Activated CD4-positive, alpha-beta T cell treated with anti-CD3 and anti-CD28 coated beads, Interleukin-2, amount 10 ng/mL, durations not matched to agents 24 days and 14 days (primary cell): ENCODE measurements at regions of chr10 and their contacts with region 1.

Region 1: DNA sequence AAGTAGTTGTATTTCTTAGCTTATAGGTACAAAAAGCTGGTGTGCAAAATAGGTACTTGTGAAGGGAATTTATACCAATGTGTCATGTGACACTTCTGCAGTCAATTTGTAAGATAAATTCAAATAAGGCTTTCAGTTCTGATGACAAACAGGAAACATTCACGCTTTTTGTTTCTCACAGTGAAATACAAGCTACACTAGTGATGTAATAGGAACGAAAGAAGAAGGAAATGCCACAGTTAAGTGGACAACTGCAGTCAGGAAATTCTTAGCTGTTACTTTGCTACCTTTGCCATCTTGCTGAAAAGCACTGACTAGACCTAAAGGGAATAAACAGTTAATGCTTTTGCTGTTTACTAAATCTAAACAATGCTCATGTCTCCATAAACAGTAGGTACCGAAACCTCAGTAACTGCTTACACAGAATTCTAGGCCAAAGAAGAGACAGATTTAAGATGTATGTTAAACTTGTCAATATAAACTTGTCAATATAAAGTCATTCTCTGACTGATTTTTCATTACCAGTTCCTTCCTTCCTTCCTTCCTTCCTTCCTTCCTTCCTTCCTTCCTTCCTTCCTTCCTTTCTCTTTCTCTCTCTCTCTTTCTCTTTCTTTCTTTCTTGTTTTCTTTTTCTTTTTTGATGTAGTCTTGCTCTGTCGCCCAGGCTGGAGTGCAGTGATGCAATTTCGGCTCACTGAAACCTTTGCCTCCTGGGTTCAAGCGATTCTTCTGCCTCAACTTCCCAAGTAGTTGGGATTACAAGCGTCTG is 10.1 kb downstream of the OTUD1 start:
- DNase-seq: no peak
- H3K4me3 Mint-ChIP-seq: peak overlapping the region; percentile 55
- H3K27ac Mint-ChIP-seq: peak overlapping the region; percentile 91
- H3K4me1 Mint-ChIP-seq: peaks cover 28% of the 10 kb centered on the region
- H3K27me3 Mint-ChIP-seq: no peaks in the 10 kb centered on the region

Region 2: DNA sequence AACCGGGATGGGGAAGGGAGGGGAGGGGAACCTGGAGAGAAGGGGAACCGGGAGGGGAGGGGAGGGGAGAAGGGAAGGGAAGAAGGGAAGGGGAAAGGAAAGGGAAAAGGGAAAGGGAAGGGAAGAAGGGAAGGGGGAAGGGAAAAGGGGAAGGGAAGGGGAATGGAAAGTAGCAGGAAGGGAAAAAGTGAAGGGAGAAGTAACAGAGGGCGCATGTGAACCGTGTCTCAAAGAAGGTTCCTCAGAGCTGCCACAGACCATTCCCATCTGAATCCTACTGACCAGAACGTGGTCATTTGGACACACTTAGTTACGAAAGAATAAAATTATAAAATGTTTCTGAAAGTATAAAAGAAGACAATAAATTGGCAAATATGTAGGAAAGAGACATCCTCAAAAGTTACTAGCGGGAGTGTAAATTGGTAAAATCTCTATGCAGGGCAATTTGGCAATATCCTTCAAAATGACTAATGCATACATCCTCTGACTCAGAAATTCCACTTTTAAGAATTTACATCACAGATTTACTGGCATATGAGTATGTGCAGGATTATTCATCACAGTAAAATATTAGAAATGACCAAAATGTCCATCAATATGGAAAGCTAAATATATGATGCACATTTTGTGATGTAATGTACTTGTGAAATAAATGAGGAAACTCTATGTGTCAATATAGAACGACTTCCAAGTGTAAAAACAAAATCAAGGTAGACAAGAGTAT is 117.3 kb before region 1 on chr10:
- intact Hi-C with region 1: loop called (anchors 2 kb)
- DNase-seq: peak; percentile 43
- H3K4me3 Mint-ChIP-seq: no peak overlapping the region
- H3K27ac Mint-ChIP-seq: peak overlapping the region; percentile 10
- H3K4me1 Mint-ChIP-seq: peaks cover 18% of the 10 kb centered on the region
- H3K27me3 Mint-ChIP-seq: no peaks in the 10 kb centered on the region

Region 3: GRCh38 chr10:23530079-23530478 is 81.1 kb after region 1 on chr10:
- intact Hi-C with region 1: loop called (anchors 5 kb)
- DNase-seq: no peak
- H3K4me3 Mint-ChIP-seq: no peak overlapping the region
- H3K27ac Mint-ChIP-seq: no peak overlapping the region
- H3K4me1 Mint-ChIP-seq: peaks cover 14% of the 10 kb centered on the region
- H3K27me3 Mint-ChIP-seq: no peaks in the 10 kb centered on the region